PC-3 (cell line): ENCODE measurements at regions of chr17 and their contacts with region 1.

Region 1: DNA sequence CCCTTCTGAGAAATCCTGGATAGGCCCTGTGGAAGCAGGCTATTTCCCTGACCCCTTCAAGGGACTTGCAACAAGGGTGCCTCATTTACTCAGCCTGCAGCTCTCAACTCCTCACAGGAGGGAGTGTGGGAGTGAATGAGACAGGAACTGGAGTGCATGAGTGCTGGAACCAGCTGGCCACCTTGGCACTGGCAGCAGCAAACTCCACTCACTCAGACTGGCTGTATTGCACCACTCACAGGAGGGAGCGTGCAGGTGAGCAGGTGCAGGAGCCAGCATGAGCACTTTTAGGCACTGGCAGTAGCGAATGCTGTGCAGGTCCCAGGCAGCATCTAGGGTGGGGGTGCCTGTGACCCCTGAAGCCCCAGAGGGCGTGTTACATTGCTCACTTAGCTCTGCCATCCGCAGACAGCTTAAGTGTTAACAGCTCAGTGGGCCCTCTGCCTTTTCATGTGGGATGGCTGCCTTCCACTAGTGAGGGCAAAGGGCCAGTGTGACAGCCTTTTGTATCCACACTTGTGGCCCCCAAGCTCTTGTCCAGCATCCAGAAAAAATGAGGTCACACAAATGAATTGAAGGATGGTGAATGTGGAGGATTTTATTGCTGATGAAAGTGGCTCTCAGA is 11.0 kb upstream of the ZNHIT3 start:
- DNase-seq: no peak
- ATAC-seq: no peak
- H3K4me3 ChIP-seq: no peak overlapping the region
- H3K27ac ChIP-seq: no peak overlapping the region
- H3K4me1 ChIP-seq: no peaks in the 10 kb centered on the region
- H3K27me3 ChIP-seq: peaks cover 10% of the 10 kb centered on the region
- CTCF ChIP-seq: no peak

Region 2: GRCh38 chr17:35788504-35789368 is 686.7 kb before region 1 on chr17:
- CTCF ChIA-PET with region 1: no interaction called
- POLR2A ChIA-PET with region 1: interaction called, 19 read pairs
- intact Hi-C with region 1: no loop called
- DNase-seq: peak; percentile 81
- ATAC-seq: peak; percentile 81
- H3K4me3 ChIP-seq: no peak overlapping the region; the same call in 1 of the 2 replicates
- H3K27ac ChIP-seq: peak overlapping the region; percentile 93
- H3K4me1 ChIP-seq: peaks cover 48% of the 10 kb centered on the region
- H3K27me3 ChIP-seq: no peaks in the 10 kb centered on the region
- CTCF ChIP-seq: no peak

Region 3: GRCh38 chr17:36496018-36496789 is 20.7 kb after region 1 on chr17:
- CTCF ChIA-PET with region 1: no interaction called
- POLR2A ChIA-PET with region 1: no interaction called
- intact Hi-C with region 1: no loop called
- DNase-seq: no peak
- ATAC-seq: no peak
- H3K4me3 ChIP-seq: no peak overlapping the region
- H3K27ac ChIP-seq: no peak overlapping the region
- H3K4me1 ChIP-seq: no peaks in the 10 kb centered on the region
- H3K27me3 ChIP-seq: no peaks in the 10 kb centered on the region
- CTCF ChIP-seq: no peak